Activated T-helper 1 cell treated with anti-CD3 and anti-CD28 coated beads, Interleukin-12 subunit alpha, Interleukin-12 subunit beta, Interleukin-2, Interleukin-4 antibody, amounts not matched to agents 30 ng/mL and 10 ng/mL and 1 ng/mL, durations not matched to agents 14 hours and 24 hours and 36 hours (primary cell): ENCODE measurements at regions of chr5 and their contacts with region 1.

Region 1: DNA sequence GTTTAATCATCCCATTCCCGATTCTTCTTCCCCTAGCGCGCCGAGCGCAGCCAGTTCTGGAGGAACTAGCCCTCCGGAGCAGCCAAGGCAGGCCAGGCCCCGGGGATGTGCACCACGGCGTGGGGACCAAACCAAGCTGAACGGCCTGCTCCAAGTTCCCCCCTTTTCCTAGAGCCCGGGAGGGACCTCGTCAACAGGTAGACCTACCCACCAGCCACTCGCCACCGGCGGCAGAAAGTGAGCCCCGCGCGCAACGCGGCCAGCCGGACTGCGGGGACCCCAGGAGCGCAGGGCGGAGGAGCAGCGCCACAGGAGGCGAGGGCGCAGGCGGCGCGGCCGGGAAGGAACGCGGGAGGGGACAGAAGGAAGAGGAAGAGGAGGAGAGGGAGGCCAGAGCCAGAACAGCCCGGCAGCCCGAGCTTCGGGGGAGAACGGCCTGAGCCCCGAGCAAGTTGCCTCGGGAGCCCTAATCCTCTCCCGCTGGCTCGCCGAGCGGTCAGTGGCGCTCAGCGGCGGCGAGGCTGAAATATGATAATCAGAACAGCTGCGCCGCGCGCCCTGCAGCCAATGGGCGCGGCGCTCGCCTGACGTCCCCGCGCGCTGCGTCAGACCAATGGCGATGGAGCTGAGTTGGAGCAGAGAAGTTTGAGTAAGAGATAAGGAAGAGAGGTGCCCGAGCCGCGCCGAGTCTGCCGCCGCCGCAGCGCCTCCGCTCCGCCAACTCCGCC is at the start of gene ISL1:
- DNase-seq: no peak
- H3K4me3 Mint-ChIP-seq: no peak within 1 kb of the TSS
- H3K27ac Mint-ChIP-seq: peak within 1 kb of the TSS; percentile 31
- H3K4me1 Mint-ChIP-seq: peaks cover 12% of the 10 kb centered on the region
- H3K27me3 Mint-ChIP-seq: peaks cover 90% of the 10 kb centered on the region
- total RNA-seq, gene ISL1: not detected in 2 replicates

Region 2: GRCh38 chr5:51138164-51138563 is 244.8 kb before region 1 on chr5:
- intact Hi-C with region 1: no loop called
- DNase-seq: no peak
- H3K4me3 Mint-ChIP-seq: no peak overlapping the region
- H3K27ac Mint-ChIP-seq: no peak overlapping the region
- H3K4me1 Mint-ChIP-seq: no peaks in the 10 kb centered on the region
- H3K27me3 Mint-ChIP-seq: no peaks in the 10 kb centered on the region

Region 3: DNA sequence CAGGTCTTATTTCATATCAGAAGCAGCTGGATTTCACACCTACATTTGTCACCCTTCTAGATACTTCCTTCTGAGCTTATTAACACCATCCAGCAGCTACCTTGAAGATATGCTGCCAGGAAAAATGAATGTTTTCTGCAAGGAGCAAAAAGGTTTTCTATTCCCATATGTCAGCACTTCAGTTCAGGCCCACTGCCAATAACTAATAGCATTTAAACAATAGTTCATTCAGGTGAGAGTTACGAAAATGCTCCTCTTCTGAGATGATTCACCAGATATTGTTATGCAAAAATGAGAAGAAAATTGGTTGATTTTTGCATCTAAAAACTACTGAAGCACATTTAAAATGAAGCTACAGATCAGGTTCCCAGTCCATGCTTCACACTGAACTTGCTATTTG is 56.1 kb before region 1 on chr5:
- intact Hi-C with region 1: no loop called
- DNase-seq: no peak
- H3K4me3 Mint-ChIP-seq: no peak overlapping the region
- H3K27ac Mint-ChIP-seq: no peak overlapping the region
- H3K4me1 Mint-ChIP-seq: no peaks in the 10 kb centered on the region
- H3K27me3 Mint-ChIP-seq: no peaks in the 10 kb centered on the region

Region 4: GRCh38 chr5:51371052-51371451 is 11.9 kb before region 1 on chr5:
- intact Hi-C with region 1: no loop called
- DNase-seq: no peak
- H3K4me3 Mint-ChIP-seq: no peak overlapping the region
- H3K27ac Mint-ChIP-seq: no peak overlapping the region
- H3K4me1 Mint-ChIP-seq: no peaks in the 10 kb centered on the region
- H3K27me3 Mint-ChIP-seq: peaks cover 3% of the 10 kb centered on the region

Region 5: GRCh38 chr5:51398875-51399642 is 16.1 kb after region 1 on chr5:
- intact Hi-C with region 1: loop called (anchors 2 kb)
- DNase-seq: no peak
- H3K4me3 Mint-ChIP-seq: no peak overlapping the region
- H3K27ac Mint-ChIP-seq: no peak overlapping the region
- H3K4me1 Mint-ChIP-seq: no peaks in the 10 kb centered on the region
- H3K27me3 Mint-ChIP-seq: peaks cover 37% of the 10 kb centered on the region

Region 6: DNA sequence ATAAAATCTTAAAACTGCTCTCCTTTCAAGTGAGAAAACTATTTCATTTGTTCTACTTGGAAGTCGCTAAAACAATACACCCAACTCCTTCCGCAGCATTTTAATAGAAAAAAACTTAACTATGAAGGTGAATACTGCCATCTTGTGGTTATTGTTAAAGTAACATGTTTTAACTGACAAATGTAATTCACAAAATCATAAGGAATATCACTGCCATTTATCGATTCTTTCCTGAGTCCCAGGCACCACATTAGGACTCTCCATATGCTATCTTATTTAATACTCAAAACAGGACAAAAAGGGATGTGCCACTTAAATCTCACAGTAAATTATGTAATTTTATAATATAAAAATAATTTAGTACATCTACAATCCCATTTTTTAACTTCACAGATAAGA is 1274.3 kb after region 1 on chr5:
- intact Hi-C with region 1: loop called (anchors 5 kb)
- DNase-seq: no peak
- H3K4me3 Mint-ChIP-seq: no peak overlapping the region
- H3K27ac Mint-ChIP-seq: no peak overlapping the region
- H3K4me1 Mint-ChIP-seq: peaks cover 5% of the 10 kb centered on the region
- H3K27me3 Mint-ChIP-seq: peaks cover 35% of the 10 kb centered on the region